BJ (cell line): ENCODE measurements at regions of chr1 and their contacts with region 1.

Region 1: GRCh38 chr1:10209905-10210810 is at the start of gene KIF1B:
- DNase-seq: peak; percentile 79
- H3K4me3 ChIP-seq: peak within 1 kb of the TSS; percentile 76
- H3K27me3 ChIP-seq: no peaks in the 10 kb centered on the region
- CTCF ChIP-seq: peak; percentile 97
- polyA plus RNA-seq, gene KIF1B: 11.8 and 15.7 TPM in 2 replicates

Region 2: DNA sequence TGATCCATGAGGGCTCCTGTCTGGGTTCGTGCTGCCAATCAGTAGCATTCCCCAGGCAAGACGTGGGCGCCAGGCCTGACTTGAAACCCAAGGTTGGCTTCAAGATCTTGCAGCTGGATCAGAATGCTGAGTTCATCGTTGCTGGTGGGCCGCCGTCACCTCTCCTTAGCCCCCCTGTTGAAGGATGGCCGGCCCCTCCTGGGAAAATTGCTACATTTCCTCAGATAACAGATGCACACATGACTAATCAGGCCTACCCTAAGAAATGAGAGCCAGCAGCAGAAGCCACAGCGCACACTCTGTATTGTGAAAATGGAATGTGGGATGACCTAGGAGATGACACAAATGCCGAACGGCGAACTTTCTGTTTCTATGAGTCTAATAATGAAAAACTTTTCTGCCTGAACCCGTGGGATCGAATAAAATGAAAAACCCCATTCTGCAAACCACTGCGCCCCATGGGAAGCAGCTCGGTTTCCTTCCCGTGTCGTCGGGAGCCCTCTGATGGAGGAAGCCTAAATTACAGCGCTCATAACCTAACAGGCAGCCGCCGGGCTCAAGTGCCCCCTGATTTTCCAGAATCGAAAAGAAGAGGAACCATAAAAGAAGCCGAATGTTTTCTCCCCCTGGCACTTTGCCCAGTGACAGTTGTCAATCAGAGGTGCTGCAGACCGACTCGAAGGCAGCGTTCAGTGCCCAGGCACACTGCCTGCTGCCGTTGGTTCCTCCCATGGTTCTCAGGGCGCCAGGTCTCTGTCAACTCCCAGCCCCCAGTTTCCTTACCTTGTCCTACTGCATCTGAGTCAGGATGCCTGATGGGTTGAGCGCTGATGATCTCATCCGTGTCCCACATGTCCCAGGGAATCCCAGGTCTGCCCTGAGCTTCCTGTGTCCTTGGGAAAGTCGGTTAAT is 1013.8 kb before region 1 on chr1:
- CTCF ChIA-PET with region 1: no interaction called
- POLR2A ChIA-PET with region 1: no interaction called
- DNase-seq: no peak
- H3K4me3 ChIP-seq: no peak overlapping the region
- H3K27me3 ChIP-seq: peaks cover 3% of the 10 kb centered on the region
- CTCF ChIP-seq: peak; percentile 79

Region 3: DNA sequence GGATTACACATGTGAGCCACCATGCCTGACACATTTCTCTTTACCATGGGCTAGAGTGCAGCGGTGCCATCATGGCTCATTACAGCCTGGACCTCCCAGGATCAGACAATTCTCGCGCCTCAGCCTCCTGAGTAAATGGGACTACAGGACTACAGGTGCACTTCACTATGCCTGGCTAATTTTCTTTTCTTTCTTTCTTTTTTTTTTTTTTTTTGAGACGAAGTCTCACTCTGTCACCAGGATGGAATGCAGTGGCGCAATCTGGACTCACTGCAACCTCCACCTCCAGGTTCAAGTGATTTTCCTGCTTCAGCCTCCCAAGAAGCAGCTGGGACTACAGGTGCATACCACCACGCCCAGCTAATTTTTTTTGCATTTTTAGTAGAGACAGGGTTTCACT is 14.6 kb before region 1 on chr1:
- CTCF ChIA-PET with region 1: interaction called, 23 read pairs
- POLR2A ChIA-PET with region 1: no interaction called
- DNase-seq: no peak
- H3K4me3 ChIP-seq: no peak overlapping the region
- H3K27me3 ChIP-seq: peaks cover 1% of the 10 kb centered on the region; the same call in 1 of the 2 replicates
- CTCF ChIP-seq: no peak

Region 4: GRCh38 chr1:10253755-10254154 is 43.6 kb after region 1 on chr1:
- CTCF ChIA-PET with region 1: interaction called, 21 read pairs
- POLR2A ChIA-PET with region 1: no interaction called
- DNase-seq: peak; percentile 76
- H3K4me3 ChIP-seq: no peak overlapping the region
- H3K27me3 ChIP-seq: no peaks in the 10 kb centered on the region
- CTCF ChIP-seq: no peak

Region 5: GRCh38 chr1:10324627-10325026 is 114.5 kb after region 1 on chr1:
- CTCF ChIA-PET with region 1: interaction called, 11 read pairs
- POLR2A ChIA-PET with region 1: no interaction called
- DNase-seq: no peak
- H3K4me3 ChIP-seq: no peak overlapping the region
- H3K27me3 ChIP-seq: no peaks in the 10 kb centered on the region
- CTCF ChIP-seq: no peak

Region 6: DNA sequence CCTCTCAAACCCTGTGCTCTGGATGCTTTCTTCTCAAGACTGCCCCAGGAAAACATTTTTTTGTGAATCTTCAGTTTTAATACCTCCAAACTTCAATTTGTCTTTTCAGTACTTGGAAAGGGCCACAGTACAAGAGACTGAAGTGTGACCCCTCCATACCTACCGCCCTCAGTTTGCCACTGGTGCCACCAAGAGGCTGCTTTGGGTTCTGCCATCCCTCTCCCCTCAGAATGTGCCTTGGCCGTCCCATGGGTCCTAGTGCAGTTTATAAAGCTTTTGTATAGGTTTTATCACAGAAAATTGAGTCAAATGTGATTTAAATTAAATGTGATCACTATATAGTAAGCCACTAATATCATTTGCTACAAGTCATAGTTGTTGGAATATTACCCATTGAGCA is 127.9 kb after region 1 on chr1:
- CTCF ChIA-PET with region 1: interaction called, 44 read pairs
- POLR2A ChIA-PET with region 1: no interaction called
- DNase-seq: no peak
- H3K4me3 ChIP-seq: no peak overlapping the region
- H3K27me3 ChIP-seq: no peaks in the 10 kb centered on the region
- CTCF ChIP-seq: peak; percentile 85

Region 7: DNA sequence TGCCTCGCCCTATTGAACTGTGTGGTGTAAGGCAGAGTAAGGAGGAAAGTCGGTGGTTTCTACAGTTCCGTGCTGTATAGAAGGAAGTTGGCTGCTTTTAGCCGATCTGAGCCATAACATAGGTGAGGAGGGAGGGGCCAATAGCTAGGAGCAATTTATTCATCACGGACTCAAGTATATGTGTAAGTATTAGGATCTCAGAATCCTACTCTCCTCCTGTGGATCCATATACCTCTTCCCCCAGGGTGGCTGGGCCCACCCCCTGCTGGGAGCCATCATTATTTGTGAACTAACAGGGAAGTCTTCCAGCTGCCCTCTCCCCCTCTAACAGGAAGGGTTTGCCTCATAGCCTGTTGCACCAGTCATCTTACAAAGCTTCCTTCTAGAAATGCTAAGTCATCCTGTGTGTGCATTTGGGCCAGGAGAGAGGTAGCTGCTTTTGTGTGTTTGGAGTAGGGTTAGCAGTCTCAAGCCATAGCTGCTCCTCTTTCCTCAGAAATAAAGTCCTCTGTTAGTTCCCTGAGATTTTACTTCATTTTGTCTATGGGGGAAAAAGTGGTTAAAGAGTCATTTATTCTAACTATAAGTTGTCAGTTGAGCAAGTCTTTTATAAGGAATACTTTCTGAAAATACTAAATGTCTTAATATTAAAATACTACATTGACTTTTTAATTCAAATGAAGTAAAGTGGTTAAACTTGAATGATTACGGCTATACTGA is 205.2 kb after region 1 on chr1:
- CTCF ChIA-PET with region 1: no interaction called
- POLR2A ChIA-PET with region 1: no interaction called
- DNase-seq: no peak
- H3K4me3 ChIP-seq: no peak overlapping the region
- H3K27me3 ChIP-seq: no peaks in the 10 kb centered on the region
- CTCF ChIP-seq: no peak